Activated CD4-positive, alpha-beta memory T cell treated with anti-CD3 and anti-CD28 coated beads for 36 hours (primary cell): ENCODE measurements at regions of chr13 and their contacts with region 1.

Region 1: GRCh38 chr13:95480131-95480545 is 72.4 kb upstream of the CLDN10 start:
- DNase-seq: peak; percentile 54
- H3K4me3 Mint-ChIP-seq: no peak overlapping the region
- H3K27ac Mint-ChIP-seq: no peak overlapping the region
- H3K4me1 Mint-ChIP-seq: peaks cover 9% of the 10 kb centered on the region
- H3K27me3 Mint-ChIP-seq: peaks cover 1% of the 10 kb centered on the region

Region 2: DNA sequence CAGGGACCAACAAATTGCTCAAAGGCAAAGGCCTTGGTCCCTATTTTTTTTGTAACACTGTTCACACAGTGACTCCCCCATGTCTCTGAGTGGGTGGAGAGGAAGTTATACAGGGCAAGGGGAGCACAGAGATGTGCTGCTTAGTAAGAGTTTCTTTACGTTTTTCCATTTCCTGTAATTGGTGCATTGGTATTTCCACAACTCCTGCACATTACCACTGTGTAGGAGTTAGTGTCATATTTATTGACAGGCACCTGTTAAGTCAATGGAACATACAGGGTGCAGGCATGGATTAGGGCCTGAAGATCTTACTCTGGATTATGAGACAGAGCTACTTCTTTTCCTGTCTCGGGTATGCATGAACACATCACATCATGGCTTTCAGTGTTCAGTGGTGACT is 812.9 kb before region 1 on chr13:
- CTCF ChIA-PET with region 1: no interaction called
- POLR2A ChIA-PET with region 1: no interaction called
- intact Hi-C with region 1: loop called (anchors 5 kb)
- DNase-seq: peak; percentile 23
- H3K4me3 Mint-ChIP-seq: no peak overlapping the region
- H3K27ac Mint-ChIP-seq: peak overlapping the region; percentile 64
- H3K4me1 Mint-ChIP-seq: peaks cover 25% of the 10 kb centered on the region
- H3K27me3 Mint-ChIP-seq: peaks cover 17% of the 10 kb centered on the region

Region 3: GRCh38 chr13:95301183-95301967 is 178.8 kb before region 1 on chr13 and contains the start of gene ABCC4:
- CTCF ChIA-PET with region 1: interaction called, 5 read pairs
- POLR2A ChIA-PET with region 1: no interaction called
- intact Hi-C with region 1: loop called (anchors 1 kb)
- DNase-seq: peak; percentile 67
- H3K4me3 Mint-ChIP-seq: peak within 1 kb of the TSS; percentile 75
- H3K27ac Mint-ChIP-seq: peak within 1 kb of the TSS; percentile 5
- H3K4me1 Mint-ChIP-seq: peaks cover 32% of the 10 kb centered on the region
- H3K27me3 Mint-ChIP-seq: no peaks in the 10 kb centered on the region
- total RNA-seq, gene ABCC4: 6.9 to 8.7 TPM

Region 4: DNA sequence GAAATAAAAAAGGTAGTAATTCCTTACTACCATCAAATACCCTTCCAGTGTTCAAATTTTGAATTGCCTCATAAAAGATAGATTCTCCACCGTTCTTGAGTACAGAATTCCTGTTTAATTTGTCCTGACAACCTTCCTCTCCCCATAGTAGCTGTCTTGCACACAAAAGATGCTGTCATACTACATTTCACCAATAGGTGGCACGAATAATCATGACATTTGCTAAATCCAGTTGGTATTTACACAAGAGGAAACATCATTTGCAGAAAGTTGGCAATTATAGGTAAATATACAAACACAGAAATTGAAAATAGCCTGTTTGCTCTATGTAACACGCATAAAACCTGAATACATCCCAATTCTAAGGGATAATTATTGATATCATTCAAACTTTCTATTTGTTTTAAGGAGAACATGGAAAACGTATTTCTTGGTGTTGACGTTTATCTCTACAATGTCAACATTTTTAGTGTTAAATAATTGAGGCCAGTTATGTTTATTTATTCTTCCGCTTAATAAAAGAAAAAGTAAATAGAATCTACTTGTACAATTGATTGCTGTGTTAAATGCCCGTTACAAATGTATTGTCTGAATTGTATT is 14.0 kb after region 1 on chr13:
- CTCF ChIA-PET with region 1: interaction called, 10 read pairs
- POLR2A ChIA-PET with region 1: no interaction called
- intact Hi-C with region 1: no loop called
- DNase-seq: no peak
- H3K4me3 Mint-ChIP-seq: no peak overlapping the region
- H3K27ac Mint-ChIP-seq: no peak overlapping the region
- H3K4me1 Mint-ChIP-seq: no peaks in the 10 kb centered on the region
- H3K27me3 Mint-ChIP-seq: peaks cover 18% of the 10 kb centered on the region